Esophagus squamous epithelium (tissue), 5 donors: ENCODE measurements at regions of chr10 and their contacts with region 1.

Region 1: GRCh38 chr10:102835007-102835482 is 2.2 kb downstream of the CYP17A1 start:
- DNase-seq: no peak
- H3K4me3 ChIP-seq: no peak overlapping the region
- H3K27ac ChIP-seq: no peak overlapping the region
- H3K4me1 ChIP-seq: peaks cover 0 to 18% (median 0%) of the 10 kb centered on the region in 3 donors
- H3K27me3 ChIP-seq: peaks cover 0 to 19% (median 0%) of the 10 kb centered on the region in 4 donors
- CTCF ChIP-seq: peak; percentile 58 to 86 (median 79)
- POLR2A ChIP-seq: no peak

Region 2: DNA sequence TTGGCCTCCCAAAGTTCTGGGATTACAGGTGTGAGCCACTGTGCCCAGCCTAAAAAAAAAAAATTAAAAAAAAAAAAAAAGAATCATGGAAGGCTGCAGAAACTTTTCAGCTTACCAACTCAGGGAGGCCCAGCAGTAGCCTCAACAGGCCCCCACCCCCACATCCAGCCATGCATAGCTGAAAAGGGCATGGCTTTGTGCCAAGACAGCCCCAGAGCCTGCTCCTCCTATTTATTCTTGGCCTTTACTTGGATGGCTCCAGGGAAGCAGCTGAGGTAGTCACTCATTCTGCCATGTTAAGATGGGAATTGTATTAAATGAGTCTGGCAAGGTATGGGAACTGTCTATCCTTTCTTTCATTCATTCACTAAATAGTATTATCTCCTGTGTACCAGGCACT is 69.3 kb after region 1 on chr10:
- intact Hi-C with region 1: loop called (anchors 5 kb)
- DNase-seq: no peak
- H3K4me3 ChIP-seq: no peak overlapping the region
- H3K27ac ChIP-seq: no peak overlapping the region
- H3K4me1 ChIP-seq: no peaks in the 10 kb centered on the region
- H3K27me3 ChIP-seq: no peaks in the 10 kb centered on the region
- CTCF ChIP-seq: no peak
- POLR2A ChIP-seq: no peak

Region 3: GRCh38 chr10:103069453-103070331 is 234.6 kb after region 1 on chr10:
- intact Hi-C with region 1: loop called (anchors 10 kb)
- DNase-seq: no peak
- H3K4me3 ChIP-seq: no peak overlapping the region
- H3K27ac ChIP-seq: no peak overlapping the region
- H3K4me1 ChIP-seq: peaks cover 0 to 13% (median 3%) of the 10 kb centered on the region in 3 donors
- H3K27me3 ChIP-seq: no peaks in the 10 kb centered on the region
- CTCF ChIP-seq: peak; percentile 64 to 80 (median 73)
- POLR2A ChIP-seq: no peak

Region 4: GRCh38 chr10:103254538-103255325 is 419.7 kb after region 1 on chr10:
- intact Hi-C with region 1: no loop called
- DNase-seq: no peak
- H3K4me3 ChIP-seq: no peak overlapping the region
- H3K27ac ChIP-seq: no peak overlapping the region
- H3K4me1 ChIP-seq: no peaks in the 10 kb centered on the region
- H3K27me3 ChIP-seq: peaks cover 0 to 2% (median 0%) of the 10 kb centered on the region in 4 donors
- CTCF ChIP-seq: no peak
- POLR2A ChIP-seq: no peak